ENCODE measurements at regions of chr10 and their contacts with region 1.

Region 1: GRCh38 chr10:133124357-133125211 is 35.4 kb upstream of the KNDC1 start:
- DNase-seq: peak; percentile 71
- H3K4me3 Mint-ChIP-seq: no peak overlapping the region
- H3K27ac Mint-ChIP-seq: no peak overlapping the region
- H3K4me1 Mint-ChIP-seq: peaks cover 4% of the 10 kb centered on the region
- H3K27me3 Mint-ChIP-seq: peaks cover 3% of the 10 kb centered on the region

Region 2: DNA sequence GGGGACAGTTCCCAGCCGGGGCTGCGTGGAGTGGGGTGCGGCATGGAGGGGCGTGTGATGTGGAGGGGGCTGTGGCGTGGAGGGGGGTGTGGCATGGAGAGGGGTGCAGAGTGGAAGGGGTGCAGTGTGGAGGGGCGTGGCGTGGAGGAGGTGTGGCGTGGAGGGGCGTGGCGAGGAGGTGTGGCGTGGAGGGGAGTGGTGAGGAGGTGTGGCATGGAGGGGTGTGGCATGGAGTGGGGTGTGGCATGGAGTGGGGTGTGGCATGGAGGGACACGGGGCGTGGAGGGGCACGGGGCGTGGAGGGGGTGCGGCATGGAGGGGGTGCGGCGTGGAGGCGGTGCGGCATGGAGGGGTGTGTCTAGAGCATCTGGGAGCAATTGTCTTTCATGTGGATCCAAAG is 372.2 kb before region 1 on chr10:
- intact Hi-C with region 1: no loop called
- DNase-seq: no peak
- H3K4me3 Mint-ChIP-seq: no peak overlapping the region
- H3K27ac Mint-ChIP-seq: no peak overlapping the region
- H3K4me1 Mint-ChIP-seq: no peaks in the 10 kb centered on the region
- H3K27me3 Mint-ChIP-seq: no peaks in the 10 kb centered on the region

Region 3: DNA sequence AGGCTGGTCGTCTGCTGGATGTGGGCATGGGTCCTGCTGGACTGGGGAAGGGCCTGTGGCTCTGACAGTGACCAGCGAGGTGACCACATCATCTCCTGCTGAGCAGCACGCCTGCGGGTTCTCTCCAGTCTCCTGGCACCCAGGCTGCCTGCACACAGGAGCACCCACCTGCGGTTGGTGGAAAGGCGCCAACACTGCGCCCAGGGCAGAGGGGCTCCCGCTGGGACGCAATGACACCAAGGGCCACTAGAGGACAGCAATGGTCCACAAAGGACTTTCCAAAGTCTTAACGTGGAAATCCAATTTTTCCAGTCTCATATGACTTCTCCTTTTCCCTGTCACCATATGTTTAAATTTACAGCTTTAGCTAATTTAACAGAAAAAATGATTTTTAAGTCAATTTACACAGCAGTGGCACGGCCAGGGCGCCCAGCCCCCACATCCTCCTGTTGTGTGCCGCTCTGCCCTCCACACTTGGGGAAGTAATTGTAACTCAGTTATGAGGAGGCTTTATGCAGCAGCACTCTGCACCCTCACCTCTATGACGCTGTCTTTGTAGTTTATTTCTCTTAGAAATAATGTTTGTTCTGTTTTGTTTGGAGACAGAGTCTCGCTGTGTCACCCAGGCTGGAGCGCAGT is 220.3 kb before region 1 on chr10:
- intact Hi-C with region 1: loop called (anchors 5 kb)
- DNase-seq: peak; percentile 71
- H3K4me3 Mint-ChIP-seq: no peak overlapping the region
- H3K27ac Mint-ChIP-seq: no peak overlapping the region
- H3K4me1 Mint-ChIP-seq: peaks cover 9% of the 10 kb centered on the region
- H3K27me3 Mint-ChIP-seq: no peaks in the 10 kb centered on the region

Region 4: DNA sequence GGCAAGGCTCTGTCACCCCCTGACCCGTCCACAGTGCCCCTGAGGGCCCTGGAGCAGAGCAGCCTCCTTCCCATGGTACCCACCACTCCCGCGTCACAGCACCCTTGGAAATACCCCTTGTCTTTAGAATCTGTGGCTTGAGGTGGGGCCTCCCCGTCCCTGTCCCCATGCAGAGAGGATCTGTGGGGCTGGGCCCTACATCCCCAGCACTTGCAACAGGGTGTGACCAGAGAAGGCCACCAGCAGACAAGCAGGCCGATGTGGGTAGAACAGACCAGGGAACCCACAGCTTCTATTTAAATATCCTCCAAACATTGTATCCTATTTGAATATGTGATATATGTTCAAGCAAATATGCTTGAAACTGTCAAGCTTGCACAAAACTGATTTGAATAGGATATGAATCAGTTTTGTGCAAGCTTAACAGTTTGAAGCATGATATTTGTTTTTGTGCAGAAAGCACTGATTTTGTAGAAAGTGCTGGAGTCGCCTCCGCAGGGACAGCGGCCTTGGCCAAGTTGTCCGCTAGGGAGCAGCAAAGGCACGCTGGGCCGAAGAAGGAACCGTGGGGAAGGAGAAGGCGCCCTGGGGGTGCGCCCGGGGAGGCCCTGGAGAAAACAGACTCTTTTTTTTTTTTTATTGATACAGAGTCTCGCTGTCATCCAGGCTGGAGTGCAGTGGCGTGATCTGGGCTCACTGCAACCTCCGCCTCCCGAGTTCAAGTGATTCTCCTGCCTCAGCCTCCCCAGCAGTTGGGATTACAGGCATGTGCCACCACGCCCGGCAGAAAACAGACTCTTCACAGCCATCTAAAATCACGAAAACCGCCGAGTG is 184.4 kb before region 1 on chr10:
- intact Hi-C with region 1: loop called (anchors 2 kb)
- DNase-seq: peak; percentile 83
- H3K4me3 Mint-ChIP-seq: no peak overlapping the region
- H3K27ac Mint-ChIP-seq: no peak overlapping the region
- H3K4me1 Mint-ChIP-seq: peaks cover 2% of the 10 kb centered on the region
- H3K27me3 Mint-ChIP-seq: peaks cover 30% of the 10 kb centered on the region

Region 5: GRCh38 chr10:132951926-132952325 is 172.7 kb before region 1 on chr10:
- intact Hi-C with region 1: no loop called
- DNase-seq: no peak
- H3K4me3 Mint-ChIP-seq: no peak overlapping the region
- H3K27ac Mint-ChIP-seq: no peak overlapping the region
- H3K4me1 Mint-ChIP-seq: no peaks in the 10 kb centered on the region
- H3K27me3 Mint-ChIP-seq: peaks cover 18% of the 10 kb centered on the region

Region 6: GRCh38 chr10:133139551-133140065 is 15.0 kb after region 1 on chr10:
- intact Hi-C with region 1: no loop called
- DNase-seq: no peak
- H3K4me3 Mint-ChIP-seq: no peak overlapping the region
- H3K27ac Mint-ChIP-seq: no peak overlapping the region
- H3K4me1 Mint-ChIP-seq: peaks cover 7% of the 10 kb centered on the region
- H3K27me3 Mint-ChIP-seq: peaks cover 6% of the 10 kb centered on the region

Measured in activated CD4-positive, alpha-beta T cell treated with anti-CD3 and anti-CD28 coated beads, Interleukin-2, amount 10 ng/mL, durations not matched to agents 24 days and 14 days (primary cell).